ENCODE measurements at regions of chr11 and their contacts with region 1.

Region 1: DNA sequence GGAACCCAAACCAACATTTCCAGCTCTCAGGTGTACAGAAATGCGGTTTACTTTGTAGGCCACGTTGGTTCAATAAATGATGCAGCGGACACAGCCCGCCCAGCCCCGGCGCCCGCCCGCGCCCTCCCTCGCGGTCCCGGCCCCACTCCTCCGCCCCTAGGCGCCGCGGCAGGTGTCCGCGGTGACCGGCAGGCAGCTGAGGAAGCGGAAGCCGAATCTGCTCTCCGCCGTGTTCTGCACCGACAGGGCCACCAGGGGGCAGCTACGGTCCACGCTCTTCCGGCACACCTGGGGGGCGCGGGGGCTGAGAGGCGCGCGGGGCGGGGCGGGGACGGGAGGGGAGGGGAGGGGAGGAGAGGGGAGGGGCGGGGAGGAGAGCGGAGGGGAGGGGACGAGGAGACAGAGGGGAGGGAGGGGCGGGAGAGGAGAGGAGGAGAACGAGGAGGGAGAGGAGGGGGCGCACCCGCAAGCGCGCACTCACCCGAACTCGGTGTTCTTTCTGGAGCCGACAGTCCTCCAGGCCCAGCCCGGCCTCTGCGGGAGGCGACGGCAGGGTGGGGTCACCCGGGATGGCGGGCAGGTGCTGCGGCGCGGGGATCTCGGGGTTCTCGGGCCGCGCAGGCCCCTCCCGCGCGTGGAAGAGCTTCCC is 5.6 kb downstream of the LMNTD2 start:
- DNase-seq: no peak

Region 2: GRCh38 chr11:369336-370018 is 185.5 kb before region 1 on chr11 and contains the start of gene B4GALNT4:
- intact Hi-C with region 1: no loop called
- DNase-seq: peak; percentile 58
- total RNA-seq, gene B4GALNT4: 0.52 to 1.8 TPM

Region 3: DNA sequence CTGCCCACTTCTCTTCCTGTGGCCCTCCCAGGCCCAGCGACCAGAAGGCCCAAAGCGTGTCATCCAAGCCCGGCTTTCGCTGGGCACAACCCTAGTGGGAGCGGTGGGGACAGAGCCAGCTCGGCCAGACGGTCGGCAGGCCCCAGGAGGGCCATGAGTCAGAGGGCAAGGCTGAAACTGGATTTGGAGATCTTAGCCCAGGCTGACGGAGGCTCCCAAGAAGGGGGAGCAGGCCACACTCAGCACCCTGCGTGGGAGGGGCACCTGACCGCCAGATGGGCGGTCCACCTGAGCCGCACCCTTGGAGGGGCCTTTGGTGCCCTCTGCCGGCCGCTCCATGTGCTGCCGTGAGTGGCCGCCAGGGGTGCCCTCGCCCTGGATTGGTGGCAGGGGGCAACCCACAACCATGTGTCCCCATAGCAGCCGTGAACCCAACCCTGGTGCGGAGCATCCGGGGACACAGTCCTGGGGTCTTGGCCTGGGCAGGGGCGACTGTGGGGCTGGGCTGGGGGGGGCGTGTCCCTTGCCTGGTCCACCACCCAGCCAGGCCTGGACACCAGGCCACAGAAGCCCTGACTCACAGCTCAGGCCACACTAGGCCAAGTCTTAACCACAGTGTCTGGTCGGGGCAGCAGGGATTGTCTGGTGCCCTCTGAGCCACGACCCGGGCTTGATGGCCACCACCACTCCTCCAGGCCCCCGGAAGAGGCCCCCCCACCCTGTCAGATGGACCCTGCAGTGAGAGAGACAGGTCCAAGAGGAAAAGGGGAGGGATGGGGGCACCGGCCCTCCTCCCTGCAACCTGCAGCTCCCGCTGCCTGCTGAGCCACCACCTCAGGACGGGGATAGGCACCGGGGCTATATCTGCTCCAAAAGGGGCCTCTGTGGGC is 173.2 kb after region 1 on chr11:
- intact Hi-C with region 1: loop called (anchors 10 kb)
- DNase-seq: peak; percentile 96

Region 4: DNA sequence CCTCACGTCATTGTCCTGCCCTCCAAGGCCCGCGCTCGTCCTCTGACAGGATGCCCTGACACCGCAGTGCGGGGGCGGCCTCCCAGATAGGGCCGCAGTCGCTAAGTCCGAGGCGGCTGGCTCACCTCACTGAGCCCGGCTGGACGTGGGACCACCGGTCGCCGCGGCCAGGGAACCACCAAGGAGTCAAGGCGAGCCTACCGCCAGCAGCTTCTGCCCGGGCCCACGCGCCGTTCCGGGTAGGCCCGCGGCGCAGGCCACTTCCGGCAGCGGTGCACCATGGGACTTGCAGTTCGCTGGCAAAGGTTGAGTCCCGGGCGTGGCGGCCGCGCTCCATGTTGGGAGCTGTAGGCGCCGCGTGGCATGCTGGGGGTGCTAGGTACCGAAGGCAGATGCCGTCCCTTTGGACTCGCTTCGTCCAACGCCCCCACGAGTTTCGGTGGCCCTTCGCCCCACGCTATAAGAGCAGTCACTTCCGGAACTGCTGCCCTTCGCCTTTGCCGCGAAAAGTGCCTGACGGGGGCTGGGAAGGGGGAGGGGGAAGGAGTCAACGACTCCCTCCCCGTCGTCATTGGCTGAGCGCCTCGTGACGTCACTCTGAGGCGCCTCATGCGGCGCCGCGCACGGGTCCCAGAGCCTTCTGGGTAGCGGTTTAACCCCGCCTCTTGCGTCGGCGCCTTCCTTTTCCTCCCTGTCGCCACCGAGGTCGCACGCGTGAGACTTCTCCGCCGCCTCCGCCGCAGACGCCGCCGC is 254.5 kb after region 1 on chr11 and contains the start of gene RPLP2:
- intact Hi-C with region 1: no loop called
- DNase-seq: peak; percentile 100
- total RNA-seq, gene RPLP2: 1,286 to 1,386 TPM